ENCODE measurements at regions of chr6 and their contacts with region 1.

Region 1: GRCh38 chr6:30013291-30013922 is 47.7 kb upstream of the POLR1H start:
- DNase-seq: no peak

Region 2: DNA sequence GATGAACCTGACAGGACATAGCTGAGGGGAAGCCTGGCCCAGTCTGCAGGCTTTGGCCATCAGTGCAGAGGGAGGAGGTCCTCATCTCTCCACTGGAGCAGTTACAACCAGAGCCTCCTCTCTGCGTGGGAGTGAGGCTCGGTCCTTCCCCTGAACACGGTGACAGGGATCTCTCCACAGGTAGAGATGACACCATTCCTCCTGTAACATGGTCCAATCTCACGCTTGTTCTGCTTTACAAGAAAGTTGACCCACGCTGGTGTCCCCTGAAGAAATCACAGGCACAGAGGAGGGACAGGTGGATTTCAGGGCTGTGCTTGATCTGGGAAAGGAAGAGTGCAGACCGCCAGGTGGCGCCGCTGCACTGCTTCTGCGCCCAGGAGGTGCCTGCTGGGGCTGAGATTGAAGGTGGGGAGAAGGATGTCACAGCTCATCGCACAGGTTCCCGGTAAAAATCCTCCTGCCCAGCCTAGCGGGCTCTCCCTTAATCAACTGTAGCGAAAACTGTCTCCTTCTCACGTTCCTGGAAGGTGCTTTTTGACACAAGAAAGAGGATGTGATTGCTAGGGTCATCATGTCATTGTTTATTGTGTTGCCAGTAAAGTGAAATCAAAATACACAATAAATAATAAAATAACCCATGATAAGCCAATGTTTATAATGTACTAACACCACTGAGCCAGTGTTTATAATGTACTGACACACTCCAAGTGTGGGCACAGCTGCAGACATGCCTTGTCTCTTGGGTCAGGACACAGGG is 165.4 kb before region 1 on chr6:
- intact Hi-C with region 1: loop called (anchors 1 kb)
- DNase-seq: peak; percentile 94

Region 3: GRCh38 chr6:31332637-31333602 is 1319.5 kb after region 1 on chr6:
- intact Hi-C with region 1: no loop called
- DNase-seq: no peak

Measured in posterior vena cava (tissue), 2 donors.